ENCODE measurements at regions of chr7 and their contacts with region 1.

Region 1: GRCh38 chr7:1861799-1862458 is 191.9 kb downstream of the ELFN1 start:
- DNase-seq: no peak
- ATAC-seq: no peak
- H3K4me3 ChIP-seq: no peak overlapping the region
- H3K27ac ChIP-seq: no peak overlapping the region
- H3K4me1 ChIP-seq: no peaks in the 10 kb centered on the region
- H3K27me3 ChIP-seq: no peaks in the 10 kb centered on the region
- CTCF ChIP-seq: no peak
- POLR2A ChIP-seq: no peak

Region 2: DNA sequence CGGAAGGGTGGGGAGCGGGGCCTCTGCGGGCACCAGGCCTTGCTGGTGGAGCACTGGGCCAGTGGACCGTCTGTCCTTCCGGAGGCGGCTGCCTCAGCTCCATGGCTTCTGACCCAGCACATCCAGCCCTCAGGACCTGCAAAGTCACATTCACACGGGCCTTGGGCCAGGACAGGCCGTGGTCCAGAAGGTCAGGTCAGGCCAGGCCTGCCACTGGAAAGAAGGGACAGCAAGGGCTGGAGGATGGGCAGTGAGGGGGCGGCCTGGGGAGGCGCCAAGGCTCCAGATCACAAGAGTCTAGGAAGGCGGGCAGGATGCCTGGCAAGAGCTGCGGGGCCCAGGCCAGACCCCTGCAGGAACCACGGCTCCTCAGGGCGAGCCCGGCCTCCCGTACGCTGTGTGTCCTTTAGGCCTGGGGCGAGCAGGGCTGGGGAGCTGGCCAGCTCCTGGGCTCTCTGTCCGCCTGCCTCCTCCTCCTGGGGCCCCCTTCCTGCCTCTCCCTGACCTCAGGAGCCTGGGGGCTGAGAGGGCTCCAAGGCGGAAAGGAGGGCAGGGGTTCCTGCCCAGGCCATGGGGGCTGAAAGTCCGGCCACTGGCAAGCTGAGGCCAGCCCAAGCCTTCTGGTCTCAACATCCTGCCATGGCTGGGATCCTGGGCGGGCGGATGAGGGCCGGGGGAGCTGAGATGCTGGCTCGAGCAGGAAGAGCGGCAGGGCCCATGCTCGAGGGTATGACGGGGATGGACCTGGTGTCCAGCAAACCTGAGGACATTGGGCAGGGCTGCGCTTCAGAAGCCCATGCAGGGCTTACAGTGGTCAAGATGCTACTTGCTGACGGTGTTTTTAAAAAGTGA is 34.0 kb after region 1 on chr7:
- intact Hi-C with region 1: loop called in 1 of 10 experiments (anchors 2 kb)
- DNase-seq: peak; percentile 60 to 89 (median 72)
- ATAC-seq: peak; percentile 83 to 85 (median 85)
- H3K4me3 ChIP-seq: no peak overlapping the region
- H3K27ac ChIP-seq: peak overlapping the region in 10 of 12 donors; percentile 4 to 77 (median 50)
- H3K4me1 ChIP-seq: peaks cover 0 to 22% (median 9%) of the 10 kb centered on the region in 12 donors
- H3K27me3 ChIP-seq: no peaks in the 10 kb centered on the region
- CTCF ChIP-seq: no peak
- POLR2A ChIP-seq: no peak